Activated CD4-positive, alpha-beta memory T cell treated with anti-CD3 and anti-CD28 coated beads for 36 hours (primary cell): ENCODE measurements at regions of chr6 and their contacts with region 1.

Region 1: DNA sequence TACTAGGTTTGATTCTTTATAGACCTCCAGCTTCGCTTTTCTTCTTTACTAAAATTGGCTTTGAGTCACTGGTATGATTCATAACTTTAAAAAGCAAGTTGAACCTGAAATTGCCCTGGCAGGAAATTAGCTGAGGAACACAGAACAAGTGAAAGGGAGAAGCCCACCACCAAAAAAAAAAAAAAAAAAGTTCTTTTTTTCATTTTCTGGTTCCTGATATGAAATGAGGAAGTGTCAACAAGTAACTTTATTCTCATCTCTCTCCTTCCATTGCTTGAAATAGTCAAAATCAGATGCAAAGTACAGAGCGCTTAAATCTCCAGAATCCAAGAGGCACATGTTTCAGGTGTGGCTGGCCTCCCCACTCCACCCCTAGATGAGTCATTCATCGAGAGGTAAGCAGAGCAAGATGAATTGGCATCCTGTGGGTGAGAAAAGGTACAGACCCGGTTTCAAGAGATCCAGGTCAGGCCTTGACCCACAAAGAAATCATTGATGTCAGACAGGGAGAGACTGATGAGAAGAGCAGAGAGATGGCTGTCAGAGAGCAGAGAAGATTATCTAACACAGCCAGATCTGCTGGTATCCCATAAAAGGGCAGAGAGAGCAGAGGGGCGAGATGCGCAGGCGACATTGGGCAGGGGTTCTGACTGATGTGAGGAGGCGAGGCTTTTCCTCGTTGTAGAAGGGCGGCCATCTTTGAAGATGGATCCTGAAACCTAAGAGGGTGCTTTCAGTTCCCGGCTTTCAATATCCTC is 54.8 kb upstream of the MBOAT1 start:
- DNase-seq: peak; percentile 50
- H3K4me3 Mint-ChIP-seq: no peak overlapping the region
- H3K27ac Mint-ChIP-seq: peak overlapping the region; percentile 4
- H3K4me1 Mint-ChIP-seq: peaks cover 7% of the 10 kb centered on the region
- H3K27me3 Mint-ChIP-seq: no peaks in the 10 kb centered on the region

Region 2: DNA sequence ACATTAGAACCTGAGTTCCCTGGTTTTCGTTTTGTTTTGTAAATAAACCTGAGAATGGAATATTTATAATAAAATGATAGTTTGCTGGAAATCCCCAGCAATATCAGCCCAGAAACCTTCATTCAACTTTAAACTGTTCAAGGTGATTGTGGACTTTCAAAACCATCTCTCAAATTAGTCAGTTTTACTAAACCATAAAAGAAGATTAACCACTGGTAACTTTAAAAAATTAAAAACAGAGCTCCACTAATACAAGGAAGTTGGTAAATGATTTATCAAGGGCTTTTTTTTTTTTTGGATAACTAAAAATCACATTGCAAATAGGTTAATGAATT is 64.7 kb before region 1 on chr6:
- CTCF ChIA-PET with region 1: no interaction called
- POLR2A ChIA-PET with region 1: no interaction called
- intact Hi-C with region 1: loop called (anchors 2 kb)
- DNase-seq: no peak
- H3K4me3 Mint-ChIP-seq: no peak overlapping the region
- H3K27ac Mint-ChIP-seq: no peak overlapping the region
- H3K4me1 Mint-ChIP-seq: peaks cover 56% of the 10 kb centered on the region
- H3K27me3 Mint-ChIP-seq: no peaks in the 10 kb centered on the region